ENCODE measurements at regions of chr16 and their contacts with region 1.

Region 1: DNA sequence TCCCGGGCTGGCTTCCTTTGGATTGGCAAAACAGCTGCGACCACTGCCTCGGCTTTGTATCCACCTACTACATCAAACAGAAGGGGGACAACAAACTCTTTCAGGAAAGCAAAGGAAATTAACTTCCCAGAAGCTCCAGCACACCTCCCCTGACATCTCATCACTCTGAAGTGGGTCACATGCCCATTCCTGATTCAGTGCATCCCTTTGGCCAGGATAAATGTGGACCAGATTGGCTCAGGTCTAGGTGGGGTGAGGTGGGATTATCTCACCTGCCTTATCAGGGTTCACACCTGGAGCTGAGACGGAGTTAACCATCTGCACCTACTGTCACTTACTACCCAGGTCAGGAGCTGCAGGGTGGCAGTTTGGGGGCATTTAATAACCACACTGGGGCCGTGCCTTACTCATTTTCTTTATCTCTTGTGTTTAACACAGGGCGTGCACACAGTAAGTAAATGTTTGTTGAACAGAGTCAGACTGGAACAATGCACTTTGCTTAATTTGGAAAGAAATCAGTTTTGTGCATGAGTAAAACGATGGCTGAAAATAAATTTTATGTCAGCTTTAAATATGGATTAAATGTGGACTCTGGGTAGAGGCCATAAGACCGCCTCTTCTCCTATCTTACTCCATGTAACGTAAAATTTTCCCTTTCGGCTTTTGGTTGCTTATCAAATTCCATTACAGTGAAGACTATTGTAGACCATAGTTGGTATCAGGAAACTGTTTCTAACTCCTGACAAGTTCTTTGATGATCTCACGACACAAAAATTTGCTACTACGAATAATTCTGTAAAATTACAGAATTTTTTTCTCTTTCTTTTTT is 36.0 kb downstream of the IQCK start:
- DNase-seq: no peak
- H3K4me3 ChIP-seq: no peak overlapping the region
- H3K27ac ChIP-seq: peak overlapping the region in 54 of 59 donors; percentile 8 to 100 (median 98)
- H3K27me3 ChIP-seq: no peaks in the 10 kb centered on the region
- CTCF ChIP-seq: no peak

Region 2: DNA sequence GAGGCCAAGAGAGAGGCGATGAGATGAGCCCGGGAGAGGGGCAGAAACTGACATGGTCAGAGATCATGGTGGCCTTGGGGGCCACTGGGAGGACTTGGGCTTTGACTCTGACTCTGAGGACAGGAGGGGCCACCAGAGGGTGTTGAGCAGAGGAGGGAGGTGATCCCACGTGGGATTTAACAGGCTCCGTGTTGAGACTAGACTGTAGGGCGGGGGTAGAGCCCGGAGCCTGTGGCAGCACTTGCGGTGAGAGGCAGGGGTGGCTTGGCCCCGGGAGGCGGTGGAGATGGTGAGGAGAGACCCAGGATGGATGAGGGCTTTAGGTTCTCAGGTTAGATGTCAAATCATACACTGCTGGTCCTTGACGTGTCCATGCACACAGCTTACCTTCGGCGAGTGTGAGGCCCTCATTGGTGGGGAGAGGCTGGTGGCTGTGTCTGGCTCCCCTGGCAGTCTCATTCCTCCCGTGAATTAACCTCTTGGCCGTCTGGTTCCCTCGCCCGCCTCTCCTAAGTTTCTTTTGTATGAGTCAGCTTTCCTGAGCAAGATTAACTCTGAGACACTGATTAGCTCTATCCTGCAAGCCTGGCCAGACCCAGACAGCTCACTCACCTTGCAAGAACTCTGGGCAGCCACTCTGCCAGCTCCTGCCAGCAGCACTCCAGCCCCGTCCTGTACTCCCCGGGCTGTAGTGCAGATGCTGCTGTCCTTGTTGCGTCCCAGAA is 158.8 kb before region 1 on chr16:
- intact Hi-C with region 1: loop called in 1 of 2 experiments (anchors 10 kb)
- DNase-seq: no peak
- H3K4me3 ChIP-seq: no peak overlapping the region
- H3K27ac ChIP-seq: peak overlapping the region in 43 of 59 donors; percentile 3 to 97 (median 46)
- H3K27me3 ChIP-seq: no peaks in the 10 kb centered on the region
- CTCF ChIP-seq: no peak

Region 3: DNA sequence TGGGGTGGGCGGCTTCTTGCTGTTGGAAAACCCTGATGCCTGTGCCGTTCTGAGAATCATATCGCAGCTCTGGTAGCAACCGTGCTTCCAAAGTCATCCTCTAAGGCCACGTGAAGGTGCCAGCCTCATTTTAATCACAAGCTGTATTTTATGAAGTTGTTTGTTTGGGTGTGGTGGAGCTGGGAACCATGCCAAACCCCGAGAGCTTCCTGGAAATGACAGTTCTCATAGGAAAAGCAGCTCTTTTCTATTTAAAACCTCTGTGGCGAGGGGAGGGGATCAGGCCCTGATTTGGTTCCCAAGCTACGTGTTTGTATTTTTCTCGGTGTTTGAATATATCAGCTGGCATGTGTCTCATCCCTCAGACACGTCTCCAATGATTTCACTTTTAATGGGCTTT is 57.7 kb before region 1 on chr16:
- intact Hi-C with region 1: loop called in 1 of 2 experiments (anchors 5 kb)
- DNase-seq: peak in 5 of 10 donors; percentile 27 to 50 (median 46)
- H3K4me3 ChIP-seq: peak overlapping the region in 1 of 59 donors; percentile 12
- H3K27ac ChIP-seq: peak overlapping the region; percentile 20 to 92 (median 85)
- H3K27me3 ChIP-seq: no peaks in the 10 kb centered on the region
- CTCF ChIP-seq: no peak

Region 4: GRCh38 chr16:19710191-19710908 is 43.7 kb before region 1 on chr16:
- intact Hi-C with region 1: loop called in 1 of 2 experiments (anchors 5 kb)
- DNase-seq: no peak
- H3K4me3 ChIP-seq: no peak overlapping the region
- H3K27ac ChIP-seq: peak overlapping the region in 53 of 59 donors; percentile 1 to 80 (median 62)
- H3K27me3 ChIP-seq: no peaks in the 10 kb centered on the region
- CTCF ChIP-seq: no peak

Region 5: DNA sequence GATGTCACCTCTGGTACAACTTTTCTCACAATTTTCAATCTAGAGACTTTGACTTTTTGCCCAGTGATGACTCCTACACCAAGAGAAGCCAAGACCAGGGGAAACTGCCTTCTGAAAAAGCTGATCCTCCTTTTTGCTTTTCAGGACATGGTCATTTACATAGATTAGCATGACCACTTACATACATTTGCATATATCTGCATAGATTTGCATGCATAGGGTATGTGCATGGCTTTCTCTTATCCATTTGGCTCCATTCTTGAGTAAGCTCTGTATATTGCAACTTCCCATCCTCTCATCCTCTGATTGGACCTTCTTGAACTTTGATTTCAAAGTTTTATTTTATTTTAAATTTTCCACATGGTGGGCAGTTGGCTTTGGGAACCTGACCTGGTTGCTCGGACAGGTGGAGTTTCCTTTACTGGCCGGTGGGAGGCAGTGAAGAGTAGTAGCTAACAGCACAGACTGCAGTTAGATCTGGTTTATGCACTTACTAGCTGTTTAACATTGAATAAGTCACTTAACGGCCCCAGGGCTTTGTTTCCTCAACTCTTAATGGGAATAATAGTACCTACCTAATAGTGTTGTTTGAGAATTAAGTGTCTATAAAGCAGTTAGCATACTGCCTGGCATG is 226.7 kb after region 1 on chr16:
- intact Hi-C with region 1: no loop called
- DNase-seq: no peak
- H3K4me3 ChIP-seq: no peak overlapping the region
- H3K27ac ChIP-seq: no peak overlapping the region
- H3K27me3 ChIP-seq: peaks cover 0 to 38% (median 3%) of the 10 kb centered on the region in 45 donors
- CTCF ChIP-seq: peak in 11 of 56 donors; percentile 6 to 24 (median 17)